ENCODE measurements at regions of chr7 and their contacts with region 1.

Region 1: DNA sequence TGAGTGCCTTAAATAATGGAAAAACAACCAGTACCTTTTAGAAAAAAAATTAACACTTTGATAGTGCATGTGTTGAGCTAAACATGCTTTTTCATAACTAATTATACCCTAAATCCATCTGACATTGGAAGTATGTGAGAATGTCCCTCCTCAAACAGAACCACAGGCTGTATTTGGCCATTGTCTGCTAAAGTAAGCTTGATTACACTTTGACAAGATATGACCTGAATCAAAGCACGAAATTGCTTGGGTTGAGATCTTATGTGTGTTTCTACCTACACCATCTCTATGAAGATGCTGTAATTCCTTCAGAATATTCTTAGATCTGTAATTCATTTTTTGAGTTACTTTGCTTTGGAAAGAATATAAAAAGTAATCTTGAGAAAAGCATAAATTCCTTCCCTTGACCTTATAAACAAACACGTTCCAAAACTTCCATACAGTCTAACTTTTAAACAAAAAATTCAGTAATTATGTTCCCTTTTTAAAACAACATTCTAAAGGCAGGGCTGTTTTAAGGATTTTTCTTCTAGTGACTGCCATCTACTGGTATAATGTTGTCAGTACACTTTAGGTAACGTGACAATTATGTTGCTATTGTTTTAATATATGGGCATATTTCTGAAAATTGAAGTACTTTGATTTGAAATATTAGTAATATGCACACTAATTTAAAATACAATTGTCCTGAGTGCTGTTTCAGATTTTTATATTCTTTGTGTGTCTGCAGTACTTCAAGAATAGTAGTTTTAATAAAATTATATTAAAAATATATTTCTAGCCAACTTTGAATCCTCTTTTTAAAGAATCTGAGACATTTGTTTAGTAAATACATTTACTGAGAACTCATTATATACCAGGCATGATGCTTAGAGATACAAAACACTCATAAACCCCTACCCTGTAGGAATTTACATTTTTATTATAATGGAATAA is 20.9 kb downstream of the CD36 start:
- DNase-seq: no peak
- ATAC-seq: no peak
- H3K4me3 Mint-ChIP-seq: no peak overlapping the region
- H3K27ac Mint-ChIP-seq: no peak overlapping the region
- H3K4me1 Mint-ChIP-seq: no peaks in the 10 kb centered on the region
- H3K27me3 Mint-ChIP-seq: no peaks in the 10 kb centered on the region

Region 2: DNA sequence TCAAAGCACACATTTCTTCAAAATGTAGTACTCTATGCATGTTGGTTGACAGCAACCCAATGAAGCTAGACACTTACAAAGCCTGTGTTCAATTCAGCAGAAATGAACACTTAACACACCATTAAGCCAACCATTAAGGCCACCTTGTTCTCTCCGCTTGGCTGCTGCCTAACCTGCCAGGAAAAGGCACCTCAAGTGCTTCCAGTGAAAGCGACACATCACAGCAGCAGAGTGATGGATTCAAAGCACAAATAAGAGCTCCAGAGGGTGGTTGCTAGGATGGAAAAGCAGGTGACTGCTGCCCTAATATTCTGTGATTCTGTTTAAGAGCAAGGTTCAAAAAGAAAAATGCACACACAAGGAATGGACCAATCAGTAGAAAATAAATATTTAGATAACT is 606.3 kb before region 1 on chr7:
- CTCF ChIA-PET with region 1: no interaction called
- POLR2A ChIA-PET with region 1: no interaction called
- intact Hi-C with region 1: loop called in 1 of 2 experiments (anchors 10 kb)
- DNase-seq: no peak
- ATAC-seq: no peak
- H3K4me3 Mint-ChIP-seq: no peak overlapping the region
- H3K27ac Mint-ChIP-seq: no peak overlapping the region
- H3K4me1 Mint-ChIP-seq: no peaks in the 10 kb centered on the region
- H3K27me3 Mint-ChIP-seq: no peaks in the 10 kb centered on the region

Region 3: DNA sequence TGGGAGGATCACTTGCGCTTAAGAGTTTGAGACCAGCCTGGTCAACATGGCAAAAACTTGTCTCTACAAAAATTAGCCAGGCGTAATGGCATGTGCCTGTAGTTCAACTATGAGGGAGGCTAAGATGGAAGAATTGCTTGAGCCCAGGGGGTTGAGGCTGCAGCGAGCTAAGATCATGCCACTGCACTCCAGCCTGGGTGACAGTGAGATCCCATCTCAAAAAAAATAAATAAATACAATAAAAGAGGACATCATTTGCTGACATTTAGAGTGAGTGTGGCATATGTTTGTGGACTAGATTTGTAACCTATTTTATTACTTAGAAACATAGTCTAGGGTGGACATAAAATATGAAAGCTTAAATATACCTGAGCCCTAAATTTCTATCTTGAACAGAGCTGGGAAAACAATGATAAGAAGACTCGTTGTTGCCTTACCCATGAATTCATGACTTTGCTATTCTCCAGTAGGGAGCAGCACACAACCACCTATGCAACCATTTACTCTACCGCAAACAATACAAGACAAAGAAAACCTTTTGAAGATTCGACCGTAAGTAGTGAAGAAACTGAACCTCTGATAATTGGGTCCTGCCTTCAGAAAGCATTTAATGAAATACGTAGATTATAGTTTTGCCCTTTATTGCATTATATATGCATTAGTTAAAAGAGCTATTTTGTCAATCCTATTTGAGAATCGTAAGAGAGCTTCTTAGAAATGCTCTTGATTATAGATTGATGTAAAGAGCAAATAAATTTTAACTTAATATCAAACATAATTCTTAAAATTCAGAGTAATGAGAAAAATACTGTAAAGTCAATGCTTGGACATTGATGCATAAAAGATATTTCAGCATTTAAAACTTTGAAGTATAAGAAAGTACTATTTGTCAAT is 231.0 kb before region 1 on chr7:
- CTCF ChIA-PET with region 1: no interaction called
- POLR2A ChIA-PET with region 1: no interaction called
- intact Hi-C with region 1: loop called (anchors 1 to 2 kb)
- DNase-seq: peak; percentile 7
- ATAC-seq: no peak
- H3K4me3 Mint-ChIP-seq: no peak overlapping the region
- H3K27ac Mint-ChIP-seq: no peak overlapping the region
- H3K4me1 Mint-ChIP-seq: no peaks in the 10 kb centered on the region
- H3K27me3 Mint-ChIP-seq: no peaks in the 10 kb centered on the region

Region 4: GRCh38 chr7:80611775-80612174 is 47.6 kb before region 1 on chr7:
- CTCF ChIA-PET with region 1: no interaction called
- POLR2A ChIA-PET with region 1: no interaction called
- intact Hi-C with region 1: no loop called
- DNase-seq: no peak
- ATAC-seq: no peak
- H3K4me3 Mint-ChIP-seq: no peak overlapping the region
- H3K27ac Mint-ChIP-seq: no peak overlapping the region
- H3K4me1 Mint-ChIP-seq: no peaks in the 10 kb centered on the region
- H3K27me3 Mint-ChIP-seq: no peaks in the 10 kb centered on the region

Region 5: DNA sequence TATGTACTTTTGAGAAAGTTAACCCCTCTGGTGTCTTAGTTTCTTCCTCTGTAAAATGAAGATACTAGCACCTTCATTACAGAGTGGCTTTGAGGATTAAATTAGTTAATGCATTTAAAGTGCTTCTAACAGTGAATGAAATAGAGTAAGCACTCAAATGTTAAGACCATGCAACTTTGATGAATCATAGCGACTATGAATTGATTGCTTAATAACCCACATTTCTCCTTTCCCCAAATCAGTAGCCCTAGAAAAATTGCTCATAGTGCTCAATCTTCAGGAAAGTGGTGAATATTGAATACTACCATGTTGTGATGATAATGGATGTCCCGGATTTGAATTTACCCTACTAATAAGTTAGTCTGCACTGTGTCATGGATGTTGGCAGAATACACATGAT is 27.2 kb after region 1 on chr7:
- CTCF ChIA-PET with region 1: no interaction called
- POLR2A ChIA-PET with region 1: no interaction called
- intact Hi-C with region 1: no loop called
- DNase-seq: no peak
- ATAC-seq: no peak
- H3K4me3 Mint-ChIP-seq: no peak overlapping the region
- H3K27ac Mint-ChIP-seq: no peak overlapping the region
- H3K4me1 Mint-ChIP-seq: no peaks in the 10 kb centered on the region
- H3K27me3 Mint-ChIP-seq: peaks cover 5% of the 10 kb centered on the region